H1 (cell line): ENCODE measurements at regions of chr12 and their contacts with region 1.

Region 1: GRCh38 chr12:131104463-131105350 is 151.0 kb downstream of the ADGRD1 start:
- DNase-seq: peak; percentile 63 to 96
- H3K4me3 ChIP-seq: no peak overlapping the region
- H3K27ac ChIP-seq: no peak overlapping the region
- H3K4me1 ChIP-seq: no peaks in the 10 kb centered on the region; a peak in 1 of 7 replicates
- H3K27me3 ChIP-seq: no peaks in the 10 kb centered on the region
- CTCF ChIP-seq: peak; percentile 99 to 100 (median 99)
- EP300 ChIP-seq: no peak
- POLR2A ChIP-seq: no peak
- RAD21 ChIP-seq: peak; percentile 91 to 92

Region 2: GRCh38 chr12:130916251-130916911 is 188.3 kb before region 1 on chr12:
- CTCF ChIA-PET with region 1: interaction called, 43 read pairs
- POLR2A ChIA-PET with region 1: no interaction called
- DNase-seq: peak; percentile 53 to 75
- H3K4me3 ChIP-seq: peak overlapping the region in 1 of 4 experiments; percentile 22; a peak in 1 of 8 replicates
- H3K27ac ChIP-seq: no peak overlapping the region
- H3K4me1 ChIP-seq: peaks cover 0 to 2% (median 0%) of the 10 kb centered on the region in 4 experiments; a peak in 2 of 7 replicates
- H3K27me3 ChIP-seq: no peaks in the 10 kb centered on the region; a peak in 1 of 7 replicates
- CTCF ChIP-seq: peak; percentile 95 to 98 (median 96)
- EP300 ChIP-seq: 0 out of 3 replicates have a peak, but pooled peaks of 1 of the 2 experiments have one; percentile 28
- POLR2A ChIP-seq: no peak
- RAD21 ChIP-seq: peak; percentile 98 to 100

Region 3: DNA sequence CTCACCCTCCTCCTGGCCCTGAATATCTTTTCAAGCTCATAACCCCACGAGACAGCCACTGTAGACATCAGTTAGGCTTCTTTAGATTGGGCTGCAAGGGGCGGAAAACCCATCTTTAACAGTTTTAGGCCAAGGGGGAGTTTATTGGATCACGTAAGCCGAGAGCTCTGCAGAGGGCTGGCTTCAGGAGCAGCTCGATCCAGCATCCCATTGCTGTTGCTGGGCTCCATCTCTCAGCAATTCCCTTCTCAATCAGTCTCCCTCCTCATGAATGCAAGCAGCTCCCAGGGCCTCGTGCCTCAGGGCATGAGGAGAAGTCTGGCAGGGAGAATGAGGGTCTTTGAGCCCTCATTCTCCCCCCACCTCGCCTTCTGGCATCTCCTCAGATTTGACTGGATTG is 91.6 kb before region 1 on chr12:
- CTCF ChIA-PET with region 1: no interaction called
- POLR2A ChIA-PET with region 1: no interaction called
- DNase-seq: no peak
- H3K4me3 ChIP-seq: no peak overlapping the region
- H3K27ac ChIP-seq: no peak overlapping the region
- H3K4me1 ChIP-seq: peaks cover 0 to 2% (median under 1%) of the 10 kb centered on the region in 4 experiments; a peak in 1 of 7 replicates
- H3K27me3 ChIP-seq: peaks cover 0 to 2% (median 0%) of the 10 kb centered on the region in 4 experiments; a peak in 1 of 7 replicates
- CTCF ChIP-seq: no peak
- EP300 ChIP-seq: no peak
- POLR2A ChIP-seq: no peak
- RAD21 ChIP-seq: no peak

Region 4: GRCh38 chr12:131028615-131029338 is 75.9 kb before region 1 on chr12:
- CTCF ChIA-PET with region 1: no interaction called
- POLR2A ChIA-PET with region 1: no interaction called
- DNase-seq: no peak
- H3K4me3 ChIP-seq: no peak overlapping the region
- H3K27ac ChIP-seq: no peak overlapping the region
- H3K4me1 ChIP-seq: no peaks in the 10 kb centered on the region
- H3K27me3 ChIP-seq: no peaks in the 10 kb centered on the region
- CTCF ChIP-seq: no peak
- EP300 ChIP-seq: no peak
- POLR2A ChIP-seq: no peak
- RAD21 ChIP-seq: no peak

Region 5: GRCh38 chr12:131085125-131085815 is 19.4 kb before region 1 on chr12:
- CTCF ChIA-PET with region 1: interaction called, 14 read pairs
- POLR2A ChIA-PET with region 1: no interaction called
- DNase-seq: no peak
- H3K4me3 ChIP-seq: no peak overlapping the region
- H3K27ac ChIP-seq: no peak overlapping the region
- H3K4me1 ChIP-seq: no peaks in the 10 kb centered on the region; a peak in 1 of 7 replicates
- H3K27me3 ChIP-seq: no peaks in the 10 kb centered on the region
- CTCF ChIP-seq: no peak
- EP300 ChIP-seq: no peak
- POLR2A ChIP-seq: no peak
- RAD21 ChIP-seq: no peak

Region 6: GRCh38 chr12:131093971-131094830 is 10.5 kb before region 1 on chr12:
- CTCF ChIA-PET with region 1: interaction called, 21 read pairs
- POLR2A ChIA-PET with region 1: no interaction called
- DNase-seq: no peak
- H3K4me3 ChIP-seq: no peak overlapping the region
- H3K27ac ChIP-seq: no peak overlapping the region
- H3K4me1 ChIP-seq: no peaks in the 10 kb centered on the region
- H3K27me3 ChIP-seq: no peaks in the 10 kb centered on the region; a peak in 1 of 7 replicates
- CTCF ChIP-seq: no peak
- EP300 ChIP-seq: no peak
- POLR2A ChIP-seq: no peak
- RAD21 ChIP-seq: no peak

Region 7: GRCh38 chr12:131454418-131455217 is 349.9 kb after region 1 on chr12:
- CTCF ChIA-PET with region 1: interaction called, 18 read pairs
- POLR2A ChIA-PET with region 1: no interaction called
- DNase-seq: peak; percentile 63 to 72
- H3K4me3 ChIP-seq: no peak overlapping the region
- H3K27ac ChIP-seq: no peak overlapping the region
- H3K4me1 ChIP-seq: no peaks in the 10 kb centered on the region
- H3K27me3 ChIP-seq: no peaks in the 10 kb centered on the region
- CTCF ChIP-seq: peak; percentile 81 to 91 (median 91)
- EP300 ChIP-seq: peak in 1 of 2 experiments; percentile 38; a peak in 1 of 3 replicates
- POLR2A ChIP-seq: no peak
- RAD21 ChIP-seq: peak; percentile 75 to 83